ENCODE measurements at regions of chr19 and their contacts with region 1.

Region 1: DNA sequence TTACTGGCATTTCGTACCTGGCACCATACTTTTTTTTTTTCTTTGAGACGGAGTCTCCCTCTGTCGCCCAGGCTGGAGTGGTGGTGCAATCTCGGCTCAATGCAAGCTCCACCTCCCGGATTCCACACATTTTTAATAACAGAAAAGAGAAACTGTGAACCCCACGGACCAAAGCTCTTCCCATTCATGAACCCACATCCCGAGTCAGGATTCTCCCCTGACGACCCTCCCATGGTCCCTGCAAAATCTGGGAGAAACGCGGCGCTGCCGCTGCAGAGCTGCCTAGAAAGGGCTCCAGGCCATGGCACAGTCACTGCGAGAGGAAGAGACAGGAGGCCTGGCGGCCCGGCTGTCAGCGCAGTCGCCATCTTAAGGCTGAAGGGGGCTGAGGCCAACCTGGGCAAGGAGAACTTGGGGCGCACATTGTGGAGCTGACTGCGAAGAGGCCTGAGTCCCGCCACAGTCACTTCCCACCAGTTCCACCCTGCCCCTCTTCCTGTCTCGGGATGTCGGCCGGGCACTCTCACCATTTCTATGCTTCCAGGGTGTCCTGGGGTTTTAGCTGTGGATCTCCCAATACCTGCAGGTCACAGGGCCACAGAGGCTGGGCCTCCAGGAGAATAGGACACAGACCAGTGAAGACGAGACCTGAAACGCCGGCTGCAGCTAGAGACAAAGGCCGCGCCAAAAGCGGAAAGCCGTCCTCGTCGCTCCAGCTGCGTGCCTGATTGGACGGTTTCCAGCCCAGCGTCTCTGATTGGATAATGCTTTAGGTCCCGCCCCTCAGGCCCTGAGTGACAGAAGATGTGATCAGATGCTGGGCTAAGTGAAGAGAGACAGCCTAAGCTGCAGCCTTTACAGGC is 71.0 kb downstream of the ZNF486 start:
- DNase-seq: peak; percentile 97
- H3K4me3 Mint-ChIP-seq: peak overlapping the region; percentile 100
- H3K27ac Mint-ChIP-seq: peak overlapping the region; percentile 93
- H3K4me1 Mint-ChIP-seq: peaks cover 12% of the 10 kb centered on the region
- H3K27me3 Mint-ChIP-seq: no peaks in the 10 kb centered on the region

Region 2: DNA sequence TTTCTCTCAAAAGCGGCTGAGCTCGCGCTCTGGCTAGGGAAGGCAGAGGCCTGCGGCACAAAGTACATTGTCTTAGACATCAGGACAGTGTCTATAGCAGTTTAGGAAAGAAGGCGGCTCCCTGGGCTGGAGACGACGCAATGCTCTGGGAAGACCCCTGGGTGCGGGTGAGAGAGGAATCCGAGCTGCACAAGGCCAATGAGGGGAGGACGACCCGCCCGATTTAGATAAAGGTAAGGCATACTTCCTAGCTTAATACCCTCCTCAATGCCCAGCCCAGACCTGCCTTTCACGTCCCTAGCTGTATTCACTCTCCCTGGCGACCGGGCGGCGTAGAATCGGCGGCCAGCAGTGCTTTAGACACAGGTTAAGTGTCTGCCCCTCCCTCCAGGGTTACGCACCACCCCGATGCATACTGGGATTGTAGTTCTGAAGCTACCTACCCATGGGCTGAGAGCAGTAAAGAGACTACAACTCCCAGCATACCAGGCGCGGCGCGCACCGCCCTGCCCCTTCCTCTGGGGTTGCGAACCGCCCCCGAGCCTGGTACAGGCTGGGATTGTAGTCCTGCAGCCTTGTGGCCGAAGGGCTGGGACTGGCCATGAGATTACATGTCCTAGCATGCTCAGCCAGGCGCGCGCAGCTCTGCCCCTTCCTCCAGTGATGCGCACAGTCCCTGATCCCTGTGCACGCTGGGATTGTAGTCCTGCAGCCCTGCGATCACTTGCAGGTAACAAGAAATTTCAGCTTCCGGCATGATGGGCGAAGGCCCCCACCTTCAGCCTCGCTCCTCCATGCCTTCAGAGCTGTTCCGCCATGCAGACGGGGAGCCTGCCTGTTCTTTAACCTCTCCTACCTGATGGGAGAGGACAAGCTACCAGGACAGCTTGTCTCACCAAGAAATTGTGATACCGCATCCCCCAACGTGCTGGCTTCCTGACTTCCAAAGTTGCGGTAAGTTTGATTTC is 461.7 kb before region 1 on chr19:
- CTCF ChIA-PET with region 1: no interaction called
- intact Hi-C with region 1: loop called (anchors 2 kb)
- DNase-seq: peak; percentile 95
- H3K4me3 Mint-ChIP-seq: peak overlapping the region; percentile 90
- H3K27ac Mint-ChIP-seq: peak overlapping the region; percentile 90
- H3K4me1 Mint-ChIP-seq: peaks cover 44% of the 10 kb centered on the region
- H3K27me3 Mint-ChIP-seq: no peaks in the 10 kb centered on the region

Region 3: DNA sequence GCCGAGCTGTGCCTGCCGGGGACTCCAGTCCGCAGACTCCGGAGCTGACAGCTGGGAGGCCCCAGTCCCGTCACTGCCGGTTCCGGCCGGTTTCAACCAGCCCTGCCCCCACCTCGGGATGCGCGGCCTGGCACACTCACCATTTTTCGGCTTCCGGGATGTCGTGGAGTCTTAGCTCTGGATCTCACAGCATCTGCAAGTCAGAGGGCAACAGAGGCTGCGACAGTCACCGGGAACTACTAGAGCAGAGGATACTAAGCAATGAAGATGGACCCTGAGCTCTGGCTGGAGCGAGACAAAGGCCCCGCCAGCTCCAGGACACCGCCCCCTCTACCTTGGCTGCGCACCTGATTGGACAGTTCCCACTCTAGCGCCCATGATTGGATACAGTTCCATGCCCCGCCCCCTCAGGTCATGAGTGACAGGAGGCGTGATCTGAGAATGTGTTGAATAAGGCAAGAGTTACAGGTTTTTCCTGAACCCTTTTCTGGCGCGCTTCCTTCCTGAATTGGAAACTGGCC is 198.7 kb before region 1 on chr19 and contains the start of gene ZNF682:
- CTCF ChIA-PET with region 1: no interaction called
- intact Hi-C with region 1: loop called (anchors 1 kb)
- DNase-seq: peak; percentile 98
- H3K4me3 Mint-ChIP-seq: peak within 1 kb of the TSS; percentile 94
- H3K27ac Mint-ChIP-seq: peak within 1 kb of the TSS; percentile 90
- H3K4me1 Mint-ChIP-seq: peaks cover 15% of the 10 kb centered on the region
- H3K27me3 Mint-ChIP-seq: no peaks in the 10 kb centered on the region
- total RNA-seq, gene ZNF682: 8.1 to 8.9 TPM

Region 4: DNA sequence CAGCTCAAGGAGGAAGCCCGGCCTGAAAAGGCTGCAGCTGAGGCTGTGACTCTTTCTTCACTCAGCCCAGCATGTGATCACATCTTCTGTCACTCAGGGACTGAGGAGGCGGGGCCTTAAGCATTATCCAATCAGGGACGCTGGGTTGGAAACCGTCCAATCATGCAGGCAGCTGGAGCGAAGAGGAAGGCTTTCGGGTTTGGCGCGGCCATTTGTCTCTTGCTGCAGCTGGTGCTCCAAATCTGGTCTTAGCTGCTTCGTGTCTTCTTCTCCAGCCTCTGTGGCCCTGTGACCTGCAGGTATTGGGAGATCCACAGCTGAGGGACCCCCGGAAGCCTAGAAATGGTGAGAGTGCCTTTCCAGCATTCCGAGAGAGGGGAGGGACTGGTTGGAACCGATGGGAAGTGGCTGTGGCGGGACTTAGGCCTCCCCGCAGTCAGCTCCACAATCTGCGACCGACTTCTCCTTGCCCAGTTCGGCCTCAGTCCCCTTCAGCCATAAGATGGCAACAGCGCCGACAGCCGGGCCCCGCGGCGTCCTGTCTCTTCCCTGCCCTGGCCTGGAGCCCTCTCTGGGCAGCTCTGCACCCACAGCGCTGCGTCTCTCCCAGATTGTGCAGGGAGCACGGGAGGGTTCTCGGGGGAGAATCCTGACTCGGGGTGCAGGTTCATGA is 160.1 kb before region 1 on chr19 and contains the start of gene ZNF90:
- CTCF ChIA-PET with region 1: interaction called, 3 read pairs
- intact Hi-C with region 1: loop called (anchors 5 kb)
- DNase-seq: peak; percentile 98
- H3K4me3 Mint-ChIP-seq: peak within 1 kb of the TSS; percentile 97
- H3K27ac Mint-ChIP-seq: peak within 1 kb of the TSS; percentile 63
- H3K4me1 Mint-ChIP-seq: peaks cover 9% of the 10 kb centered on the region
- H3K27me3 Mint-ChIP-seq: no peaks in the 10 kb centered on the region
- total RNA-seq, gene ZNF90: 15.5 to 17.6 TPM

Region 5: GRCh38 chr19:20287070-20287469 is 49.1 kb after region 1 on chr19:
- CTCF ChIA-PET with region 1: no interaction called
- intact Hi-C with region 1: no loop called
- DNase-seq: no peak
- H3K4me3 Mint-ChIP-seq: no peak overlapping the region
- H3K27ac Mint-ChIP-seq: no peak overlapping the region
- H3K4me1 Mint-ChIP-seq: no peaks in the 10 kb centered on the region
- H3K27me3 Mint-ChIP-seq: no peaks in the 10 kb centered on the region

Region 6: DNA sequence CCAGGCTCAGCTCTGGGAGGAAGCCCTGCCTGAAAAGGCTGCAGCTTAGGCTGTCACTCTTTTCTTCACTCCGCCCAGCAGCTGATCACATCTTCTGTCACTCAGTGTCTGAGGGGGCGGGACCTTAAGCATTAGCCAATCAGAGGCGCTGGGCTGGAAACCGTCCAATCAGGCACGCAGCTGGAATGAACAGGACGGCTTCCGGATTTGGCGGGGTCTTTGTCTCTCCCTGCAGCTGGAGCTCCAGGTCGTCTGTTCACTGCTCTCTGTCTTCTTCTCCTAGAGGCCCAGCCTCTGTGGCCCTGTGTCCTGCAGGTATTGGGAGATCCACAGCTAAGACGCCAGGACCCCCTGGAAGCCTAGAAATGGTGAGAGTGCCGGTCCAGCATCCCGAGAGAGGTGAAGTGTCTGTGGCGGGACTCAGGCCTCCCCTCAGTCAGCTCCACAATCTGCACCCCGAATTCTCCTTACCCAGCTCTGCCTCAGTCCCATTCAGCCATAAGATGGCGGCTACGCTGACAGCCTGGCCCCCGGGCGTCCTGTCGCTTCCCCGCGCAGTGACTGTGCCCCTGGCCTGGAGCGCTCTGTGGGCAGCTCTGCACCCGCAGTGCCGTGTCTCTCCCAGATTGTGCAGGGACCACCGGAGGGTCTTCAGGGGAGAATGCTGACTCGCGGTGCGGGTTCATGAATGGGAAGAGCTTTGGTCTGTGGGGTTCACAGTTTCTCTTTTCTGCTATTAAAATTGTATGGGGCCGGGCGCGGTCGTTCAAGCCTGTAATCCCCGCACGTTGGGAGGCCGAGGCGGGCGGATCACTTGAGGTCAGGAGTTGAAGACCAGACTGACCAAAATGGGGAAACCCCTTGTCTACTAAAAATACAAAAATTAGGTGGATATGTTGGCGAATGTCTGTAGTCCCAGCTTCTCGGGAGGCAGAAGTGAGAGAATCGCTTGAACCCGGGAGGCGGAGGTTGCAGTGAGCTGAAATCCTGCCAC is 538.4 kb after region 1 on chr19 and contains the start of gene ZNF66:
- CTCF ChIA-PET with region 1: interaction called, 3 read pairs
- intact Hi-C with region 1: loop called (anchors 5 kb)
- DNase-seq: peak; percentile 98
- H3K4me3 Mint-ChIP-seq: peak within 1 kb of the TSS; percentile 100
- H3K27ac Mint-ChIP-seq: peak within 1 kb of the TSS; percentile 95
- H3K4me1 Mint-ChIP-seq: peaks cover 18% of the 10 kb centered on the region
- H3K27me3 Mint-ChIP-seq: no peaks in the 10 kb centered on the region
- total RNA-seq, gene ZNF66: 3.9 to 4.9 TPM

Measured in activated naive CD4-positive, alpha-beta T cell treated with anti-CD3 and anti-CD28 coated beads for 36 hours (primary cell).